Posterior vena cava (tissue), 2 donors: ENCODE measurements at regions of chr2 and their contacts with region 1.

Region 1: GRCh38 chr2:135149251-135149650 is 97.2 kb downstream of the RAB3GAP1 start:
- DNase-seq: no peak

Region 2: DNA sequence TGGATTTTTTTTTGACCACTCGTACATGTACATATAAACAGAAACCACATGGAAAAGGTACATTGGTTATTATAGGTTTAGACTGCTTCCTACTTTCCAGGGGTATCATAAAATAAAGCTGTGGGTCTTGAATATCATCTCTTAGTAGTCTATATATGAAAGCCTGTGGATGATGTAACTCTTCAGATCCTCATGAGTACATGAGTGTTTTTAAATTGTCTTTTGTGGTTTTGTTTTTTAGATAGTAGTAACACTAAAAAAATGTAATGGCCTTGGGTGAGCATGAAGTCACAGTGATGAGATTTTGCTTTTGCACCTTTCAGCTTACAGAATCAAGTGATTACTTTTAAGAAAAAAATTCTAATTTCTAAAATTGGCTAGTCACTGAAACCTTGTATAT is 16.9 kb before region 1 on chr2:
- intact Hi-C with region 1: loop called in 1 of 2 experiments (anchors 1 kb)
- DNase-seq: no peak

Region 3: DNA sequence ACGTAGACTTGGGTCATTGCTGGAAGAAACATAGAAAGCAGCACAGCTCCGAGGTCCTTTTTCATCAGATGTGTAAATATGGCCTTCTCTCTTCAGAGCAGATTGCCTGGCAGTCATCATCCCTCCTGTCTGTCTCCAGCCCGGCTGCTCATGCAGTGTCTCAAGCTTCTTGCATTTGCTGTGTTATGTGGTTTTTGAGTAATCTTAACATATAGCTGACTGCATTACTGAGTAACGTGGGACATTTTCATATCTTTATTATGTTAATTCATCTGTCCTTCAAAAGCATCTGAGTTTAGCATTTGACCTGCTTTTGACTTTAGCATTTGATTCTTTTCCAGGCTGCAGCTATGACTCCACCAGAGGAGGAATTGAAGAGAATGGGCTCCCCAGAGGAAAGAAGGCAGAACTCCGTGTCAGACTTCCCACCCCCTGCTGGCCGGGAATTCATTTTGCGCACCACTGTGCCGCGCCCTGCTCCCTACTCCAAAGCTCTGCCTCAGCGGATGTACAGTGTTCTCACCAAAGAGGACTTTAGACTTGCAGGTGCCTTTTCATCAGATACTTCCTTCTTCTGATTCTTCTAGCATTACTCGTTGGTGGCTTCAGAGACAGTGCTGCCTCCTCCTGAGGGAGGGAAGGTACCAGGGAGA is 19.1 kb after region 1 on chr2:
- intact Hi-C with region 1: no loop called
- DNase-seq: no peak

Region 4: GRCh38 chr2:135189148-135189547 is 39.9 kb after region 1 on chr2:
- intact Hi-C with region 1: loop called in 1 of 2 experiments (anchors 2 kb)
- DNase-seq: no peak